CD8-positive, alpha-beta T cell (primary cell): ENCODE measurements at regions of chr20 and their contacts with region 1.

Region 1: DNA sequence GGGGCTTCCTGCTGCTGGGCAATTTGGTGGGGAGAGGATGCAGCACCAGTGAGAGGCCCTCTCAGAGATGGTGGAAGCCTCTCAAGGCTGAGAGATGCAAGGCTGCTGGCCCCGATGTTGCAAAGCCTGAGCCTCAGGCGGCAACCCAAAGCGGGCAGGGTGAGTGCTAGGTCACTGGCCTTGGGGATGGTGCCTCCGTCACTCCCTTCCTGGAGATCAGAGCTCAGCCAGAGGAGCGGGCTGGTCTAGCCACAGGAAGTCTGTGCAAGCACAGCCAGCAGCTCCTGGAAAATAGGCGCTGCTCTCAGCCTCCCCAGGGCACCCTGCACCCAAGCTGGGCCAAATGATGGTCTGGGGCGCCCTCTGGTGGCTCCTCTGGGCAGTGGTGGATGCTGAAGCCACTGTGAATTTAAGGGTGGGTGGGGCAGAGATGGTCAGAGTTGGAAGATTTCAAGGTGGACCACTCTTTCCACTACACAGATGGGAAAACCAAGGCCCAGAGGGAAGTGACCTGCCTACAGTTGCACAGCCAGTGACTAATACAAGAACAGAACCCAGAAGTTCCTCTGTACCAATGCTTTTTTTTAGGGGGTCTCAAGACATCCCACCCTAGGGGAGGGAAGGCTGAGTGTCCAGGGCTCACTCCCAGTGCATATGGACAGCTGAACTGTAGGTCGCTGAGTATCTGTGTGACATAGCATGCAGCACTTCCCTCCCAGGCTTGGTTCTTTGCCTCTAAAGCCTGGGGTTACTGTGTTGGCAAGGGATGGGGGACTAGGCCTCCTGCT is 20.8 kb downstream of the C20orf203 start:
- DNase-seq: peak; percentile 77 to 97 (median 86)
- ATAC-seq: peak; percentile 97
- H3K4me3 ChIP-seq: no peak overlapping the region
- H3K4me3 Mint-ChIP-seq: peak overlapping the region; percentile 56
- H3K27ac ChIP-seq: no peak overlapping the region
- H3K27ac Mint-ChIP-seq: no peak overlapping the region
- H3K4me1 ChIP-seq: peaks cover 7% of the 10 kb centered on the region
- H3K4me1 Mint-ChIP-seq: peaks cover 8% of the 10 kb centered on the region
- H3K27me3 ChIP-seq: no peaks in the 10 kb centered on the region
- H3K27me3 Mint-ChIP-seq: no peaks in the 10 kb centered on the region
- CTCF ChIP-seq: peak; percentile 95

Region 2: GRCh38 chr20:32031007-32031958 is 621.6 kb before region 1 on chr20:
- CTCF ChIA-PET with region 1: interaction called, 8 read pairs
- POLR2A ChIA-PET with region 1: no interaction called
- intact Hi-C with region 1: loop called in 1 of 2 experiments (anchors 2 kb)
- DNase-seq: peak; percentile 22 to 73 (median 59)
- ATAC-seq: peak; percentile 75
- H3K4me3 ChIP-seq: peak overlapping the region; percentile 28 to 32
- H3K4me3 Mint-ChIP-seq: peak overlapping the region; percentile 39
- H3K27ac ChIP-seq: no peak overlapping the region
- H3K27ac Mint-ChIP-seq: no peak overlapping the region
- H3K4me1 ChIP-seq: peaks cover 4% of the 10 kb centered on the region
- H3K4me1 Mint-ChIP-seq: peaks cover 2% of the 10 kb centered on the region
- H3K27me3 ChIP-seq: peaks cover 4 to 7% of the 10 kb centered on the region in 2 experiments
- H3K27me3 Mint-ChIP-seq: peaks cover 31% of the 10 kb centered on the region
- CTCF ChIP-seq: peak; percentile 100

Region 3: DNA sequence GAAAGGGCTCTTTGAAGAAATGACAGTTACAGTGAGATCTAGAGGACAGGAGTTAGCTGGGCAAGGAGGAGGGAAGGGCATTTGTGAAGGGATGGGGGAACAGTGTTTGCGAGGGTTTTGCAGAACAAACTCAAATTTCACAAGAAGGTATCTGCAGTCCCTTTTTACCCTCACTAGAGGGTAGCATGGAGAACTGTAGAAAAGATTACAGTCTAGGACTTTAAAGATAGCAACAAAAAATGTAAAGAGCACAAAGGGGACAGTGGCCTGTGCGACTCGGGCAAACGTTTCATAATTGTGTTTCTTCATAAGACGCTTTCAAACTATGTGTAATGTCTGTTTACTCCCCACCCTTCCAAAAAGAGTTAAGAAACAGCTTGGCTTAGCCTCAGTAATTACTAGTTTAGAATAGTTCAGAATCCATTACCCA is 316.0 kb before region 1 on chr20:
- CTCF ChIA-PET with region 1: interaction called, 6 read pairs
- POLR2A ChIA-PET with region 1: no interaction called
- intact Hi-C with region 1: loop called (anchors 1 kb)
- DNase-seq: peak in 2 of 9 experiments; percentile 32 to 57
- ATAC-seq: peak; percentile 71
- H3K4me3 ChIP-seq: no peak overlapping the region
- H3K4me3 Mint-ChIP-seq: no peak overlapping the region
- H3K27ac ChIP-seq: no peak overlapping the region
- H3K27ac Mint-ChIP-seq: no peak overlapping the region
- H3K4me1 ChIP-seq: no peaks in the 10 kb centered on the region
- H3K4me1 Mint-ChIP-seq: peaks cover 17% of the 10 kb centered on the region
- H3K27me3 ChIP-seq: no peaks in the 10 kb centered on the region
- H3K27me3 Mint-ChIP-seq: no peaks in the 10 kb centered on the region
- CTCF ChIP-seq: peak; percentile 64

Region 4: DNA sequence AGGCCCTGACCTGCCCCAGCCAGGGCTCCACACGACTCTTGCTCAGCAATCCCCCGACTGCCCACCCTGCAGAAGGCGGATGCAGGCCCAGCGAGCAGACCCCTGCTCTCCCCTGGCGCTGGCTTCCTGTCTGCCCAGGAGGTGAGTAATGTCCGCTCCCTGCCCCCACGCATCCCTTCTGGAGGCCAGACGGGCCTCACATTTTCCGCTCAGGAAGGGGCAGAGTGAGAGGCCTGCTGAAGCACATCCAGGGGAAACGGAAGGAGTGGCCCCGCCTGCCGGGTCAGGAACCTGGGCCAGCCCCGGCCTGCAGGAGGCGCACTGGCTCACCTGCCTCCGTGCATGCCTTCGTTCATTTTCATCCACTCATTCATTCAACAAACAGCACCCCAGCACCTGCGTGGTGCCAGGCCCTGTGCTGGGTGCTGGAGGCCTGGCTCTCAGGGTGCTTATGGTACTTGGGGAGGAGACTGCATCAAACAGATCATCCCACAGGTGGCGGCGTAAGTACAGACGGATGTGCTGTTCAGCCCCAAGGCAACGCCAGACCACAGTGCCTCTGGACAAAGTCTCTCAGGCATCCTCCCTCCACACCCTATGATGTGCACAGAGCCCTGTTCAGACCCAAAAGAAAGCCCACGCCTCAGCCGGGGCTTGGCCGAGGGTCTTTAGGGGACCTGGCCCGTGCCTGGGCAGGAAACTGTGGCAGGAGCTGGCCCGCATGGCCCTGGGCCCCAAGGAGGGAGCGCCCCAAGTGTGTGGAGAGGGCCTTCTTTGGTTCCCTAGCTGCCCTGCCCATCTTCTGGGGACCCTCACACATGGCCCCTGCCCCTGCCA is 182.7 kb before region 1 on chr20:
- CTCF ChIA-PET with region 1: interaction called, 10 read pairs
- POLR2A ChIA-PET with region 1: no interaction called
- intact Hi-C with region 1: loop called in 1 of 2 experiments (anchors 2 kb)
- DNase-seq: peak in 3 of 9 experiments; percentile 24 to 45 (median 37)
- ATAC-seq: peak; percentile 36
- H3K4me3 ChIP-seq: no peak overlapping the region
- H3K4me3 Mint-ChIP-seq: no peak overlapping the region
- H3K27ac ChIP-seq: no peak overlapping the region
- H3K27ac Mint-ChIP-seq: peak overlapping the region; percentile 79
- H3K4me1 ChIP-seq: peaks cover 1% of the 10 kb centered on the region
- H3K4me1 Mint-ChIP-seq: peaks cover 14% of the 10 kb centered on the region
- H3K27me3 ChIP-seq: no peaks in the 10 kb centered on the region
- H3K27me3 Mint-ChIP-seq: no peaks in the 10 kb centered on the region
- CTCF ChIP-seq: no peak

Region 5: GRCh38 chr20:32585011-32585518 is 67.9 kb before region 1 on chr20 and contains the start of gene NOL4L:
- CTCF ChIA-PET with region 1: interaction called, 5 read pairs
- POLR2A ChIA-PET with region 1: no interaction called
- intact Hi-C with region 1: loop called (anchors 2 to 5 kb)
- DNase-seq: peak in 8 of 9 experiments; percentile 24 to 70 (median 52)
- ATAC-seq: peak; percentile 25
- H3K4me3 ChIP-seq: peak within 1 kb of the TSS; percentile 59 to 74
- H3K4me3 Mint-ChIP-seq: peak within 1 kb of the TSS; percentile 93
- H3K27ac ChIP-seq: no peak within 1 kb of the TSS
- H3K27ac Mint-ChIP-seq: peak within 1 kb of the TSS; percentile 90
- H3K4me1 ChIP-seq: peaks cover 33% of the 10 kb centered on the region
- H3K4me1 Mint-ChIP-seq: peaks cover 42% of the 10 kb centered on the region
- H3K27me3 ChIP-seq: no peaks in the 10 kb centered on the region
- H3K27me3 Mint-ChIP-seq: no peaks in the 10 kb centered on the region
- CTCF ChIP-seq: no peak
- total RNA-seq, gene NOL4L: 39.1 to 39.7 TPM